GM13976 (cell line): ENCODE measurements at regions of chr3 and their contacts with region 1.

Region 1: DNA sequence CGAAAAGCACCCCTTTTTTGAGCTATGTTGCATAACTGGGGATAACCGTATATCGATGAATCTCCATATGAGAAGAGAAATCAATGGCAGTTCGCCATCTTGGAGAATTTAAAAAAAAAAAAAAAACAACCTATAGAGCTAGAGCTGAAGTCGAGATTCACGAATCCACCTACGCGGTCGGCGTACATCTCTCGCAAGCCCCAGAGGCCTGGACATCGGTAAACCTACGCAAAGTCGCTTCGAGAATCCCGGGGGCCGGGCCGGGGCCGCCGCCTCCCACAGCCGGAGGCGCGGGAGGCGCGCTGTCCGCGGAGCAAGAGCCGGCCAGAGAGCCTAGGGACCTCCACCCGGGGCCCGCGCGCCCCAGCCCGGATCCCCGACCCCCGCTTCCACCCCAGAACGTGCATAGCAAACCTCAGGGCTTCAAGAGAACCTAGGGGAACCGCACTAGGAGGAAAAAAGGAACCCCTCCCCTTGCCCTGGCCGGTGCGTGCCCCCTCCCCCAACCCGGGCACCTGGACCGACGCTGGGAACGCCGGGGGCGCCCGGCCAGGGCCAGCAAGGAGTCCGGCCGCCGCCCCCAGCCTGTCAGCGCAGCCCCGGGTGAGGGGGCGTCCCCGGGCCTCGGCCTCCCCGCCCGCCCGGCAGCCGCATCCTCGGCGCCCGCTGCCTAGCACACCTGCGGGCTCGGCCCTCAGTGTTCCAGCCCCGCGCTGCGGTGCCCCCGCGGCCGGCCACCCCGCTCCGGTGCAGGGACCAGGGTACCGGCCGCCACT is 567 bp downstream of the PFN2 start:
- DNase-seq: peak; percentile 77
- CTCF ChIP-seq: no peak

Region 2: GRCh38 chr3:149299938-149300791 is 670.0 kb before region 1 on chr3:
- in situ Hi-C with region 1: no loop called
- DNase-seq: no peak
- CTCF ChIP-seq: no peak

Region 3: GRCh38 chr3:149609595-149609994 is 360.5 kb before region 1 on chr3:
- in situ Hi-C with region 1: no loop called
- DNase-seq: peak; percentile 38
- CTCF ChIP-seq: no peak

Region 4: DNA sequence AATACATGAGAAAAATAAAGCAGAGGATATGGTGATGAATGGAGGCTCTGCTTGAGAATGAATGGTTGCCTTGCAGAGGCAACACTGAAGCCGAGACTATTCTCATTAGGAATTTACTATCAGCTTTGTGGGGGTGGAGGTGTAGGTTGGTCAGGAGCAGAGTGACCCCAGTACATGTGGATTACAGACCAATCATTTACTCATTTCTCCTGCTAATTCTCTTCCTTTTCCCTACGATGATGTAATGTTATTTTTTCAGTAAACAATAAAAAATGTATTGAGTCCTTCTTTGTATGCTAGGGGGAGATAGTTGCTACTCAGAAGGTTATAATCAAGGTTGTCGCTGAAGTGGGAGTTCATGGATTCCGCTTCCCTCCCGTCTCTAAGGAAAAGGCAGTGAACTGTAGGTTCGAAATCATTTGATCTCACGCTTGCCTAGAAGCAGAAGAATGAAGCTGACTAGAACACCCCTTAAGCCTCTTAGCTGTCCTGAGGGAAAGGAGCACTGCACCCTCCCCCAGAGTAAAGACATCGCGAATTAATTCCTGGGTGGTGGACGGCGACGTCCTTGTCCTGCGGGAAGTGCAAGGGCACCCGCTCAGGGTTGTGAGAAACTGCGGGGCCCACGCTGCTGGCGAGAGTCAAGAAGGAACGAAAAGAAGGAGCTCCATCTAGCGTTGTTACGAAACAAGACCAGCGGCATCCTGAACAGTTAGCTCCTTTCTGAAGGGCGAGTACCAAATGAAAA is 213.7 kb after region 1 on chr3:
- in situ Hi-C with region 1: loop called (anchors 10 kb)
- DNase-seq: peak; percentile 64
- CTCF ChIP-seq: peak; percentile 67

Region 5: GRCh38 chr3:150286390-150287147 is 316.4 kb after region 1 on chr3:
- in situ Hi-C with region 1: no loop called
- DNase-seq: peak; percentile 38
- CTCF ChIP-seq: peak; percentile 24

Region 6: GRCh38 chr3:150371741-150372254 is 401.7 kb after region 1 on chr3:
- in situ Hi-C with region 1: no loop called
- DNase-seq: no peak
- CTCF ChIP-seq: no peak